Activated T-helper 2 cell treated with anti-CD3 and anti-CD28 coated beads, Interferon-gamma antibody, Interleukin-2, Interleukin-4, amounts not matched to agents 10 μg/mL and 5 μg/mL and 100 μg/mL, durations not matched to agents 14 hours and 24 hours and 36 hours (primary cell): ENCODE measurements at regions of chr5 and their contacts with region 1.

Region 1: GRCh38 chr5:131634996-131635754 is at the start of gene RAPGEF6:
- DNase-seq: peak; percentile 98
- H3K4me3 Mint-ChIP-seq: peak within 1 kb of the TSS; percentile 95
- H3K27ac Mint-ChIP-seq: peak within 1 kb of the TSS; percentile 97
- H3K4me1 Mint-ChIP-seq: peaks cover 30% of the 10 kb centered on the region
- H3K27me3 Mint-ChIP-seq: no peaks in the 10 kb centered on the region
- total RNA-seq, gene RAPGEF6: 31.0 and 33.9 TPM in 2 replicates

Region 2: GRCh38 chr5:131270809-131271208 is 364.4 kb before region 1 on chr5:
- intact Hi-C with region 1: loop called (anchors 5 kb)
- DNase-seq: no peak
- H3K4me3 Mint-ChIP-seq: peak overlapping the region; percentile 78
- H3K27ac Mint-ChIP-seq: peak overlapping the region; percentile 74
- H3K4me1 Mint-ChIP-seq: peaks cover 49% of the 10 kb centered on the region
- H3K27me3 Mint-ChIP-seq: no peaks in the 10 kb centered on the region

Region 3: DNA sequence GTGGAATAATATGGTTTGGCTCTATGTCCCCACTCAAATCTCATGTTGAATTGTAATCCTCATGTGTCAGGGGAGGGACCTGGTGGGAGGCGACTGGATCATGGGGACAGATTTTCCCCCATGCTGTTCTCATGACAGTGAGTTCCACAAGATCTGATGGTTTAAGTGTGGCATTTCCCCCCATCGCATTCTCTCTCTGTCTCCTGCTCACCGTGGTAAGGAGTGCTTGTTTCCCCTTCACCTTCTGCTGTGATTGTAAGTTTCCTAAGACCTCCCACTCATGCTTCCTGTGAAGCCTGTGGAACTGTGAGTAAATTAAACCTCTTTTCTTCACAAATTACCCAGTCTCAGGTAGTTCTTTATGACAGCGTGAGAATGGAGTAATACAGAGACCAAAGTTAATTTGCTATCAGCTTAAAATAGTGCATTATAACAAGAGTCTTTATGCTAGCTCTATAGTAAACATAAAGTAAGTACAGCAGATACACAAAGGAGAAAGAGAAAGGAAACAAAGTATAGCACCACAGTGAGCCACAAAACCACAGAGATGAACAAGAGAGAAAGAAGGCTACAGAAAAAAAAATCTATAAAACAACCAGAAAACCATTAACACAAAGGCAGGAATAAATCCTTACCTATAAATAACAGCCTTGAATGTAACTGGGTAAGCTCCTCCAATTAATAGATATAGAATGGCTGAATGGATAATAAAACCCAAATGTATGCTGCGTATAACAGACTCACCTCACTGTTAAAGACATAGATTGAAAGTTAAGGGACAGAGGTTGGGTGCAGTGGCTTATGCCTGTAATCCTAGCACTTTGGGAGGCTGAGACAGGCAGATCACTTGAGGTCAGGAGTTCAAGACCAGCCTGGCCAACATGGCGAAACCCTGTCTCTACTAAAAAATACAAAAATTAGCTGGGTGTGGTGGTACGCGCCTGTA is 39.8 kb before region 1 on chr5:
- intact Hi-C with region 1: loop called (anchors 2 kb)
- DNase-seq: no peak
- H3K4me3 Mint-ChIP-seq: peak overlapping the region; percentile 68
- H3K27ac Mint-ChIP-seq: peak overlapping the region; percentile 87
- H3K4me1 Mint-ChIP-seq: peaks cover 41% of the 10 kb centered on the region
- H3K27me3 Mint-ChIP-seq: no peaks in the 10 kb centered on the region

Region 4: DNA sequence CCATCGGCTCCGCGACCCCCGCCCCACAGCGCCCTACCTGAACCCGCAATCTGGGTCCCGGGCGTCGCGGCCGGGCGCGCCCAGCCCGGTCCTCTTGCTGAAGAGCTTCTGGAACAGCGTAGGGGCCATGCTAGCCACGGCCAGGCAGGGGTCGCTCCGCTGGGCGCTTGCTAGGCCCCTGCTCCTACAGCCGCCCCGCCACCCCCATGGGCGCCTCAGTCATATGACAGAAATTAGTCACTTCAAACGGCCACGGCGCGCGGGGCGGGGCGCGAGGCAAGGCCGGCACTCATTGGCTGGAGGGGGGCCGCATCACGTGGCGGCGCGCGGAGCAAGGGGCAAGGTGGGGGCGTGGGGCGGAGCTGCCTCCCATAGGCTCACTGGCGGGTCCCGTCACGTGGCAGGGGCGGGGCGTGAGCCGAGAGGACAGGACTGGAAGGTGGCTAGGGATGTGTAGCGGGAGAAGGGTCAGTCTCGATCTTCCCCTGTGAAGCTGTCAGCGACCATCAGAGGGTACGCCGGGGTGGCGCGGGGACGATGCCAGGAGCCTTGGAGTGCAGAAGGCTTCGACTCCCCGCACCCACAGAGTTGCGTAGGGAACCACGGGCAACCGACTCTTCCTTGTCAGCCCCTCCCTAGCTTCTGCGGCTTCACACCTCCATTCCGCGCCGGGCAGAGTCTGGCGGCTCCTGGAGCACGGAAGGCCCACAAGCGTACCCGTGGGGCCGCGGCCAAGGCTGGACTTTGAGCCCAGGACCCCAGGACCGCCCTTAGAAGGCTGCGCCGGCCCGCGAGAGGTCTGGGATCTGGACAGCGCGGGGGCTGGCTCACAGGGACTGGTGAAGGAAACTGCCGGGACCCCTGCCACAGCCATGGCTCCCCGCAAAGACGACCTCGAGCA is 161.9 kb after region 1 on chr5 and contains the start of gene FNIP1:
- intact Hi-C with region 1: loop called (anchors 1 kb)
- DNase-seq: peak; percentile 99
- H3K4me3 Mint-ChIP-seq: peak within 1 kb of the TSS; percentile 97
- H3K27ac Mint-ChIP-seq: peak within 1 kb of the TSS; percentile 91
- H3K4me1 Mint-ChIP-seq: peaks cover 28% of the 10 kb centered on the region
- H3K27me3 Mint-ChIP-seq: peaks cover 8% of the 10 kb centered on the region
- total RNA-seq, gene FNIP1: 18.1 and 18.8 TPM in 2 replicates

Region 5: DNA sequence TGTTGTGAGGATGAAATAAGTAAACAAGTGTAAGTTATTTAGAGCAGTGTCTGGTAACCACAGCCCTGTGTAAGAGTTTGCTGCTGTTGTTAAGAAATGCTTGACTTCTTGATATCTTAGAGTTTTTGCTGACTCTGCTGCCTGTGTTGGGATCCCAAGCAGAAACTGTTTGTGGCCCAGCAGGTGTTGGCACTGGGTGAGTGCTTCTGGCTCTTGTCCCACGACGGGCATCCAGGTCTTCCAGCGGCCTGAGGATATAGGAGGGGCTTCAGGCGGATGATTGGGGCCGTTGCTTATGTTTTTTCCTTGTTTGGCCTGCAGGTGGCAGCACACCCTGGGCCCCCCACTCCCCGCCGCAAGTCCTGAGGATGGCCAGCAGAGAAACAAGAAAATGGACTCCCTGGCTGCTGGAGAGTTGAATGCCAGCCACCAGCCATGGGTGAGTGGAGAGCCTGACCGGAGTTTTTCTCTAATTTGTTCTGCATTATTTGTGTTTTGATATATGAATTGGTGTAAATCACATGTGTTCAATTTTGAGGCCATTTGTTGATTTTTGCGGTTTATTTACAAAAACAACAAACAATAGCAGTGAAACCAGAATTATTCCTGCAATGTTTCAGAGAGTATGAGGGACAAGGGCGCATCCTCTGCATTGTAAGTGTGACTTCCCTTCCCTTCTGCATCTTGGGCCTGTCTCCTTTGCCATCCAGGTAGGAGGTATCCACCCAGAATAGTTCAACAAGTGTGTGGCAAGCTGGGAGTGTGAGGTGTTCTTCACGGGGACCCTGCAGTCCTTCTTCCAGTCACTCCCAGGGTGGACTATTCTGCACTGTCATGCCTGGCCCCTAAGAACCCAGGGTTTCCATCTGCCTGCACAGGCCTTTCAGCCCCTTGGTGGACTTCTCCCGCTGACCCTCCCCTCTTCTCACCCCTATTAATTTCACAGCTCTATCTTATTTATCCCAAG is 784.6 kb after region 1 on chr5:
- intact Hi-C with region 1: loop called (anchors 10 kb)
- DNase-seq: peak; percentile 64
- H3K4me3 Mint-ChIP-seq: peak overlapping the region; percentile 72
- H3K27ac Mint-ChIP-seq: peak overlapping the region; percentile 89
- H3K4me1 Mint-ChIP-seq: peaks cover 85% of the 10 kb centered on the region
- H3K27me3 Mint-ChIP-seq: no peaks in the 10 kb centered on the region